GM10248 (cell line): ENCODE measurements at regions of chr1 and their contacts with region 1.

Region 1: DNA sequence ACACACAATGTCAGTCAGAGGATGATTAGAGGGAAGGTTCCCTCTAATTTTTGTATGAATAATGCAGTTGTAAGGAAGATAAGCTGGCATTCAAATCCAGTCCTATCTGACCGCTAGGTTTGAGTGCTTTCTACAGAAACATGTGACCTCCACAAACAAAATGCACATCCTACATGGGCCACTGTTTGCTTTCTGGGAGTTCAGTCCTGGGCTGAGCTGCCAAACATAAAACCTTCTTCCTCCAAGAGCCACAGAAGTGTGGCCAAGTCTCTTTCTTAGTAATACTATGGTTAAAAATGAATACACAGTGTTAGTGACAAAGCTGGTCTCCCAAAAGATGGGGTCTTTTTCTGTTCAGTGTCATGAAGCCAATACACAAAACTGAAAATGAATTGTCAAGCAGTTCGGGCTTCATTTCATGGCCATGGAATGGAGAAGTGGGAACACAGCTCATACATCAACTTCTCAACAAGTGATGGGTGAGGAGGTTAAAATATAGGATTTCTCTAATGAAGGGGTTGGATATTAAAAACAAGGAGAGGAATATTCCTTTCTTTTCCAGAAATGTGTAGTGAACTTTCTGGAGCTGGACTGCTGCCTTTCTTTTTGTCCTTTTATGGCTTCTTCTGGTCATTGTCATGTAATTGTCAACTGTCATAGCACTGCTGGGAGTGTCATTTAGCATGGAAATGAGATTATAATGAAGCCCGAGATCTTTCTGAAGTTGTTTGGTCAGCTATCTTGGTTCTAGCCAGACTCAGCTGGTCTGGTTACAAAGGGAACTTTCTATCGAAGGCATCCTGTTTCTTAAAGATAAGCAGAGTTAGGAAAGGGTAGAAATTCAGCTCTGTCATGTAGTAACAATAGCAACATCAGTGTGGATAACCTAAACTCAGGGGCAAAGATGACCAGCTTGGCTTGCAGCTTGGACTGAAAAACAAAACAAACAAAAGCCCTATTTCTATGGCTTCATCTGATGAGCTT is 135.1 kb downstream of the CHD1L start:
- DNase-seq: no peak
- CTCF ChIP-seq: no peak

Region 2: GRCh38 chr1:147351140-147351835 is 26.3 kb before region 1 on chr1:
- CTCF ChIA-PET with region 1: no interaction called
- POLR2A ChIA-PET with region 1: no interaction called
- DNase-seq: no peak
- CTCF ChIP-seq: no peak

Region 3: GRCh38 chr1:147389532-147390524 is 12.3 kb after region 1 on chr1:
- CTCF ChIA-PET with region 1: interaction called, 36 read pairs
- POLR2A ChIA-PET with region 1: no interaction called
- DNase-seq: peak; percentile 65
- CTCF ChIP-seq: peak; percentile 71